ENCODE measurements at regions of chr4 and their contacts with region 1.

Region 1: GRCh38 chr4:121370729-121371325 is 10.0 kb downstream of the QRFPR start:
- DNase-seq: peak in 1 of 2 donors; percentile 41
- ATAC-seq: no peak

Region 2: DNA sequence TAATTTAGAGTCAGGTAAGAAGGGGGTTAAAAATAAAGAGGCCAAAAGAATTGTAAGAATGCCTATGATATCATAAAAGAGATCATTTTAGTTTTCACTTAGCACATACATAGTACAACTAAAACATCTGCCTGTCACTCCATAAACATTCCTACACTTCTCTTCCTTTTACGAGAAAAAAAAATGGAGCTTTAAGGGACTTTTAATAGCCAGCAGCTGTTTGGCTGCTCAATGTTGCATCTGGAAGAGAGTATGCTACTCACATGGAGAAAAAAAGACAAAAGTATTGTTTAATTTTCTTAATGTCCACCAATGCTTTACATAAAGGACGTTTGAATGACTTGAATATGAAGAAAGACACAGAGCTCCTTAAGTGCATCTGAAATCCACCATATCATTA is 158.0 kb before region 1 on chr4:
- intact Hi-C with region 1: no loop called
- DNase-seq: no peak
- ATAC-seq: no peak

Region 3: GRCh38 chr4:121656269-121656641 is 285.4 kb after region 1 on chr4:
- intact Hi-C with region 1: loop called in 1 of 2 experiments (anchors 10 kb)
- DNase-seq: peak in 1 of 2 donors; percentile 36
- ATAC-seq: peak; percentile 65

Region 4: DNA sequence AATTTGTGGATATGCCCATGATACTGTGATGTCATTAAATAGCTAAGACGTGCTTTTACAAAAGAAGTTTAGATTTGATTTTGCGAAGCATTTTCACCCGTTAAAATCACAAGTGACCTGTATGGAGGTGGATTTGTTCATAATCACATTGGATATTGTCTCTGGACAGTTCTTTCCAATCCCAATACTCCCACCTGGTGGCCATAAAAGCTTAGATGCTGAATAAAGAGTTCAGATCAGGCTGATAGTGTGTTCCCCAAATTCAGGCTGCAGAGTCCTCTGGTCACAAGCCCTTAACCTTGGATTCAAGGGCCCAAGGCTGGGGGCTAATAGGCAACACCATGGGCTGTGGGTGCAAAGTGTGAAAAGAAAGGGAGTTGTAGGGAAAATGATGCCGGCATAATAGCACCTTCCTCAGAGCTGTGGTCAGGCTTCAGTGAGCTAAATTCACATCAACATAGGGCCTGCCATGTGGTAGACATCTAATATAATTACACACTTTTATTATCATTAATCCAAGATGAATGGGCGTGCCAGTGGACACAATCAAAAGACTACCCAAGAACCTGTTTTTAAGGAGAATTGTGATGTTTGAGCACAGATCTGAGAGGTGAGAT is 366.0 kb after region 1 on chr4:
- intact Hi-C with region 1: loop called in 1 of 2 experiments (anchors 5 kb)
- DNase-seq: no peak
- ATAC-seq: no peak